AG04449 (cell line): ENCODE measurements at regions of chr5 and their contacts with region 1.

Region 1: DNA sequence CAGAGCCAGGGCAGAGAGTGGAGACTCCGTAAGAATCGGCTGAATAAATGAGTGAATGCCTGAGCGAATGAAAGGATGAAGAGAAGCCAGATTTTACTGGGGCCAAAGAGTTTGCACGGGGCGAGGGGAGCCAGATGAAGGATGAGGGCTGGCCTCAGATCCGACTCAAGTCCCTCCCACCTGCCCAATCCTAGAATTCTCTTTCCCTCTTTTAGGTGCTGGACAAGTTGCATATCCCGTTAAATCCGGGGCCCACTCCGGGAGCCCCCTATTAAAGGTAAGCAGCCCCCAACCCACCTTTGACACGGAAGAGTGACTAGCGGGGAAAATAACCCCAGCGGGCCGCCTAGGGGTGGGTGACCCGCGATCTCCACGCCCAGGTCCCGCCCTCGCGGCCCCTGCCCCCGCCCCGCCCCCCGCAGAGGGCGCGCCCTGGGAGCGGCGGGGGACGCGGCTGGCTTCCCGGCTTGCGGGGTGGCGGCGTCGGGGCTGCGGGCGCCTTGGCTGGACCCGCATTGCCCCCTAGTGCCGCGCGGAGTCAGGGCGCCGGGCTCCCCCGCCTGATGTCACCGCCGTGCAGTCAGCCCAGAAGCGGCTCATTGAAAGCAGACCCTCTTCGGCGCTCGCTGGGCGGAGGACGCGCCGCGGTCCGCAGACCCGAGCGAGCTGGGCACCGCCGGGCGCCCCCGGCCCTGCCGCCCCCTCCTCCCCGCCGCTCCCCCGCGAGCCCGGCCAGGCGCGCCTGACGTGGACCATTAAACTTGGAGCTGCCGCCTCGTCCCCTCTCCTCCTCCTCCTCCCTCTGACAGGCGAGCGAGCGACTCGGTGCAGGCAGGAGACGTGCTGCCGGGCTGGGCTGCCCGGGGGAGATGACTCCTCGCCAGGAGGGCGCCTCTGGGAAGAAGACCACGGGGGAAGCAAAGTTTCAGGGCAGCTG is at the start of gene ADRA1B:
- DNase-seq: no peak
- H3K4me3 ChIP-seq: peak within 1 kb of the TSS; percentile 54
- CTCF ChIP-seq: peak; percentile 89

Region 2: DNA sequence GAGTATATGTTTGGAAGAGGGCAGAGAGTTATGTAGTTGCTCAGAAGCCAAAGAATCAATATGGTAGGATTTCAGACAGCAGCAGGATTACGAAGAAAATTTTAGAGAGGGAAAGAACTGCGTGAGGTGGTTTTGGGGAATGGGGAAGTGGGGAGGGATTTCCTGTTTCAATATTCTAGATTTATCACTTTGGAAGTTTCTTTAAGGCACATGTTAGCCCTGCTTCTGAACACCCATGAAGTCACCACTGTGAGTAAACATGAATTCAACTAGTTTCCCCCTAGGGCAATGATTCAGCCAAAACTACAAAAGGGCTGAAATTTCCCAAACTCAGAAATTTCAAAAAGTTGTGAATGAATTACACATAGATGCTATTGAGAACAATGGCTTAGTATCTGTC is 948.6 kb before region 1 on chr5:
- CTCF ChIA-PET with region 1: no interaction called
- POLR2A ChIA-PET with region 1: no interaction called
- DNase-seq: no peak
- H3K4me3 ChIP-seq: no peak overlapping the region
- CTCF ChIP-seq: no peak

Region 3: DNA sequence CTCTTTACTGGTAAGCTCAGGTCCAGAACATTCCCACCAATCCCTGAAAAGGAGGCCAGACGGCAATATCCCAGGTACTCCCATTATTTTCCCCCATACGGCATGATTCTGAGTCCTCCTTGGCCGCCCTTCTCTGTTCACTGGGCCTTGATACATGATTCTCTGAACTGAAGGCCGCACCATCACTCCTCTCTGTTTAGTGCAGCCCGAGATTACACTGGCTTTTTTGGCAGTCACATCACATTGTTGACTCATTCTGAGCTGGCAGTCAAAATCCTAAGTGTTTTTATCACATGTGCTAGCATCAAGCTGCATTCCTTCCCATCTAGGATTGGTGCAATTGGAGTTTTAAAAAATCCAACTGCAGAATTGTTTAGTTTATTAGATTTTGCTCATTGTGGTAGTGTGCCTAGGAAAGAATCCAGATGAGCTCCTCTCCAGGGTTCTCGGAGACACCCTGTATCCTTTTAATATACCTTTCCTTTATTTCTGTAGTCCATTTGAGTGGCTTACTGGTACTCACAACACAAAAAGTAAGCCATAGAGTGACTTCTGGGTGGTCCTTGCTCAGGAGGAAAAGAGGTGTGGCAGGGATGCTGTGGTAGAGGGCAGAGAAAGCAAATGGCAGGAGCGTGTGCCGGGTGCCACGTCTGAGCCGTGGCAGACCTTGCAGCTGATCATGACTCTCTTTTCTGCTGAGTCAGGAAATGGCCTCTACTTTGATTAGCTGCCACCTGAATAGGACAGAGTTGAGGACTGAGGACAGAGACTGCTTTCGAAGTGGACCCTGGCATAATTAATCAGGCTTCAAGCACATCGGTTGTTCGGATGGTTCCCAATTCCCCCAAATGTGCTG is 464.7 kb before region 1 on chr5:
- CTCF ChIA-PET with region 1: interaction called, 15 read pairs
- POLR2A ChIA-PET with region 1: no interaction called
- DNase-seq: peak; percentile 77
- H3K4me3 ChIP-seq: no peak overlapping the region
- CTCF ChIP-seq: no peak